Activated CD4-positive, alpha-beta memory T cell treated with anti-CD3 and anti-CD28 coated beads for 36 hours (primary cell): ENCODE measurements at regions of chr16 and their contacts with region 1.

Region 1: DNA sequence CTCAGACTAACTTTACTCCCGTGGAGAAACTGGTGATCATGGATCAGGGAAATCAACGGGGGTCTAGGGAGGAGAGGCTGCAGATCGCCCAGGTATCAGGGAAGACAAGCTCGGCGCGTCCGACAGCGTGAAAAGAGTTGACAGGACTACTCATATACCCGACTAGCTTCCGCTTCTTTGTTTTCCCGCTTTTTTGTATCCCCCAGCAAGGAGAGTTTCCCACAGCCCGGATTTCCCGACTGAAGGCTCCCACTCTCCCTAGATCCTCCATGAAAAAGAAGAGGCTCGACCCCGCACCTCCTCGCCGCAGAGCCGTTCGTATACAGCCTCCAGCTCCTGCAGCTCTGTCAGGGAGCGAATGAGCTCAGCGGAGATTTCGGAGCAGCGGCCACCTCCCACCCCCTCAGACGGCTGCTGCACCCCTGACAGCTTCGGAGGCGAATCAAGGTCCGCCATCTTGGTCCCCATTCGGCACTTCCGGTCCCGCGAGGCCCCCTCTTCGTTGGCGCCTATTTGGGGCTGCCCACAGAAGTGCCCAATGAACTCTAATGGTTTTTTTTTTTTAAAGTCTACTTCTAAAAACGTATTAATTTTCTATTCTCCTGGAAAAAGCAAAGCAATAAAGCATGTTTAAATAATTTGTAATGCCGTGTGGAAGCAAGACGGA is at the start of gene COG4:
- DNase-seq: peak; percentile 95
- H3K4me3 Mint-ChIP-seq: peak within 1 kb of the TSS; percentile 91
- H3K27ac Mint-ChIP-seq: peak within 1 kb of the TSS; percentile 98
- H3K4me1 Mint-ChIP-seq: peaks cover 48% of the 10 kb centered on the region
- H3K27me3 Mint-ChIP-seq: no peaks in the 10 kb centered on the region
- total RNA-seq, gene COG4: 35.9 to 40.2 TPM

Region 2: GRCh38 chr16:70289229-70290098 is 233.7 kb before region 1 on chr16 and contains the start of gene AARS1:
- CTCF ChIA-PET with region 1: no interaction called
- POLR2A ChIA-PET with region 1: interaction called, 14 read pairs
- intact Hi-C with region 1: loop called (anchors 2 kb)
- DNase-seq: peak; percentile 97
- H3K4me3 Mint-ChIP-seq: peak within 1 kb of the TSS; percentile 98
- H3K27ac Mint-ChIP-seq: peak within 1 kb of the TSS; percentile 98
- H3K4me1 Mint-ChIP-seq: peaks cover 31% of the 10 kb centered on the region
- H3K27me3 Mint-ChIP-seq: peaks cover 2% of the 10 kb centered on the region
- total RNA-seq, gene AARS1: 165 to 170 TPM

Region 3: GRCh38 chr16:70402916-70403659 is 120.1 kb before region 1 on chr16:
- CTCF ChIA-PET with region 1: no interaction called
- POLR2A ChIA-PET with region 1: interaction called, 7 read pairs
- intact Hi-C with region 1: loop called (anchors 2 kb)
- DNase-seq: no peak
- H3K4me3 Mint-ChIP-seq: no peak overlapping the region
- H3K27ac Mint-ChIP-seq: peak overlapping the region; percentile 2
- H3K4me1 Mint-ChIP-seq: peaks cover 39% of the 10 kb centered on the region
- H3K27me3 Mint-ChIP-seq: no peaks in the 10 kb centered on the region

Region 4: DNA sequence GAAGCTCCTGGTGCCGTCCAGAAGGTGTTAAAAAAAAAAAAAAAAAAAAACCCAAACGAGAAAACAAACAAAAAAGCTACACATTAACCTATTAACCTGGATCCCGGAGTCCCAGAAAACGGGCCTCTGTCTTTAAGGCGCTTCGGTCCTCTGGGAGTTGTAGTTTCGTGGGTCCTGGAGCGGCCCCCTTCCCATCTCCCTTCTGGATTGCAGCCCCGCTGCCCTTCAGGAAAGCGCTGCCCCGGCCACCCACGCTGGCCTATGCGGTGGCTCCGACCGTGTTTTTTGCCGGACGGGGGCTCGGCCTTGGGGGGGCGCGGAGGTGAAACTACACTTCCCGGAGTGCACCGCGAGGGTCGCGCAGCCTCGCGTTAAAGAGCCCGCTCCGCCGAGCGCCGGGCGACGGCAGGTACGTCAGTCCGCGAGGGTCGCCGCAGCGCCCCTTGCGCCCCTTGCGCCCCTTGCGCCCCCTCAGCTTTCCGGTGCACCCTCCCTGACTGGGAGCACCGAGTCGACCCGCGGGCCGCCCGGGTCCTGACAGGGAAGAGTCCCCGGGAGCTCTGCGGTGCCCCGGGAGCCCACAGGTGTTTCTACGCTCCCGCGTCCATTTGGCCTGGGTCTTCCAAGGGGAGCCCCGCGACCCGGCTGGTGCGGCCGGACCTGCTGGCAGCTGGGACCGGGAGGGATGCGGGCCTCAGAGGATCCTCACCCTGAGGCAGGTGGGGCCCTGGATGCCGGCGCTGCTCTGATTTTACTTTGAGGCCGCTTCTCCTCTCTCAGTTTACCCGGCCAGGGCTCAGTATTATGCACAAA is 68.8 kb before region 1 on chr16 and contains the start of gene FCSK:
- CTCF ChIA-PET with region 1: no interaction called
- POLR2A ChIA-PET with region 1: no interaction called
- intact Hi-C with region 1: loop called (anchors 2 kb)
- DNase-seq: peak; percentile 69
- H3K4me3 Mint-ChIP-seq: peak within 1 kb of the TSS; percentile 85
- H3K27ac Mint-ChIP-seq: peak within 1 kb of the TSS; percentile 67
- H3K4me1 Mint-ChIP-seq: peaks cover 12% of the 10 kb centered on the region
- H3K27me3 Mint-ChIP-seq: no peaks in the 10 kb centered on the region
- total RNA-seq, gene FCSK: 13.1 to 14.0 TPM

Region 5: DNA sequence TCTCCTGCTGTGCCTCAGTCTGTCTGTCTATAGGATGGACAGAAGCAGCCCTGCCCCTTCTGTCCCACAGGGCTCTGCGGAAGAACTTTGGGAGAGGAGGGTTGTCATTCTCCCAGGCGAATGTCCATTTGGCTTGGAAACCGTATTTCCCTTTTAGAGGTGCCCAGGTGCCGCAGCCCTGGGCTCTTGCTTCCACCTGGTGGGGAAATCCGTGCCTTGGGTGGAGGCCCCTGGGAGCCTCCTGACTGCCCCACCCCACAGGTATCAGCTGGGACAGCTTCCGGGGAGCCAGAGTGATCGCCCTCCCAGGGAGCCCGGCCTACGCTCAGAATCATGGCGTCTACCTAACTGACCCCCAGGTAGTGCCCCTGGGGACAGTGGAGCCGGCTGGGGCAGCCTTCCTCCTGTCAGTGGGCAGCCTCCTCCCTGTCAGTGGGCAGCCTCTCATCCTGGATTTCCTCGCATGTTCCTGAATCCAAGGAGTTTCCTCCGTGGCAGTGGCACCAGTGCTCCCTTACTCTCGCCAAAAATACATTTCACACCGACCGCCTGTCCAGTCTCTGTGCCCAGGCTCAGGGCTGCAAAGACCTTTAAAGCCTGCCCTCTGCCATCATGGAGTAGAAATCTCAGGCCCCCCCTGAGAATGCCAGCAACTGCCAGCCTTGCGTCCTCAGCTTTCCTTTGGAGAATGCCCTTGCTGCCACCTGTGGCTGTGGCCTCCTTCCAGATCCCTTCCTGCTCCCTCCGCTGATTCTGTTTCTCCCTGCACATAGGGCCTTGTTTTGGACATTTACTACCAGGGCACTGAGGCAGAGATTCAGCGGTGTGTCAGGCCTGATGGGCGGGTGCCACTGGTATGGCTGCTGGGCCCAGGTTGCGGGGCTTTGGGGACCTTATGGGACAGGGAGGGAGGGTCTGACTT is 55.8 kb before region 1 on chr16:
- CTCF ChIA-PET with region 1: no interaction called
- POLR2A ChIA-PET with region 1: no interaction called
- intact Hi-C with region 1: no loop called
- DNase-seq: no peak
- H3K4me3 Mint-ChIP-seq: no peak overlapping the region
- H3K27ac Mint-ChIP-seq: no peak overlapping the region
- H3K4me1 Mint-ChIP-seq: no peaks in the 10 kb centered on the region
- H3K27me3 Mint-ChIP-seq: no peaks in the 10 kb centered on the region